GM10248 (cell line): ENCODE measurements at regions of chr6 and their contacts with region 1.

Region 1: DNA sequence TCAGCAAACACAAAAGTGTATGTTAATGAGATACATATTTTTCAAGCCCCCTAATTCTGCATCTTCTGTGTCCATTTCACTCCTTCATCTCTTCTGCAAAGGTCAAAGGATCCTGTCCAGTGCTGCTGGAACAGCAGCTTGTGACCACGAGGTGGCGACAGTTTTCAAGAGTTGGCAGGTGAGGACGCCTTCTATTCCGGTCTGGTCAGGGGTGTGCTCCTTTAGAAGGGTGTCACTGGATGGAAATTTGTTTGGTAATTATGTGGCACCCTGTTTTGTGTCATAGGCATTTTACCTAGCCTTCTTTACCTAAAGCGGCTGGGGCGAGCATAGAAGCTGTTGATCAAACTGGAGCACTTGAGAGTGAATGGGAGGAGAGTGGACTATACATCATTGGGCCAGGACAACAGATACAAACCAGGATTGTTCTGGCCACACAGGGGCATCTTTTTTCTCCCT is 32.9 kb upstream of the ERVFRD-1 start:
- DNase-seq: peak; percentile 83
- CTCF ChIP-seq: peak; percentile 96

Region 2: GRCh38 chr6:11155589-11155988 is 11.2 kb after region 1 on chr6:
- CTCF ChIA-PET with region 1: interaction called, 14 read pairs
- POLR2A ChIA-PET with region 1: no interaction called
- DNase-seq: no peak
- CTCF ChIP-seq: no peak

Region 3: DNA sequence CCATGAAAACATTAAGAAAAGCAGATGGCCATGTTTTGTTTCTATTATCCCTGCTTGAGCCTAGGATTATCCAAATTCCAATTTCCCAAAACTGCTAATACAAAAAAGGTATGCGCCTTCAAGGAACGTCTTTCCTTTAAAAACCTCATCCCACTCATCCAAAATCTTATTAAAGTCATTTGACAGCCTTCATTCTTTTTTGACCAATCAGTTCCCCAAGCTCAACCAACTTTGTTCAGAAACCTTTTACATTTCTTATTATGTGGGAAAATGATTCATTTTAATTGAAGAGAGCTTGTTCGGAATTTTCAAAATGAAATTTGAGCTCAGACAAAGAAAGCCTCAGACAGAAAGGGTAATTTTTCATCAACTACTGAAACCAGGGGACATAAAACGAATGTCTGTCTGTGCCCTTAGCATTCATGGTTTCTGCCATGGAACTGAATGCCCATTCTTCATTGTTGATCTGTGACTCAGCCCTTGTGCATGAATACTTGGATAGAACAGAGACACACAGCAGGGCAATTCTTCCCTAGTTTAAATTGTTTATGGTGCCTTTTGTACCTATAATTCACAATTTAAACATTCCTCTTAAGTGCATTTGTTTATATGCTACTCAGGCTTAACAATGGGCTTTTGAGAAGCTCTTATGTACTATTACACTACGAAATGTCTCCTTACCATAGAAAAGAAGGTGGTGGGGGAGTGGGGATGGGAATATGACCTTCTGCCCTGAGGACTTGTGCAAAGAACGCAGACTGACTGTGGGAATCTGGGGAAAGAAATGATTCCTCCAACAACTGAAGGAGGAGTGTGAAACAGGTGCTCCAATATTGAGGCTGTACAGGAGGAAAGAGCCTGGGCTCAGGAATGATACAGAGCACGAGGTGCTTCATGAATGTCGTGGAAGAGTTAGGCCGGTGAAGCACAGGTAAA is 16.9 kb after region 1 on chr6:
- CTCF ChIA-PET with region 1: interaction called, 11 read pairs
- POLR2A ChIA-PET with region 1: no interaction called
- DNase-seq: no peak
- CTCF ChIP-seq: no peak